Endothelial cell of umbilical vein (primary cell): ENCODE measurements at regions of chr9 and their contacts with region 1.

Region 1: DNA sequence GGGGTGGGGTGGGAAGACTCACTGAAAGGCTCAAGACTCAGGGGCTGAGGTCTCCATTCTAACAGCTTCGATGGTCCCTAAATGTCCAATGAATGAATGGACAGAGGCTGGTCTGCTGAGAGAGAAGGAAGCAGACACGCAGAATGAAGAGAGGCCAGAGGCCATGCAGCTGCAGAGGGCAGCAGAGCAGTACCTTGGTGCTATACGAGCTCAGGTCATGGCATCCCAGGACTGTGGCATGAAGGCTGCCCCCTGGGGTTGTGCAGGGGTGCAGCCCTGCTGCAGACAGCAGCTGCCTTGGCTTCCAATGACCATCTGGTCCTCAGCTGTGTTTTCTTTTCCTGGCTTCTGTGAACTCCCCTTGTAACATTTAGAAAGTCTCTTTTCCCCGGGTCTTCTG is 15.2 kb upstream of the CORO2A start:
- DNase-seq: no peak
- H3K4me3 ChIP-seq: no peak overlapping the region
- H3K27ac ChIP-seq: no peak overlapping the region
- H3K4me1 ChIP-seq: no peaks in the 10 kb centered on the region
- H3K27me3 ChIP-seq: no peaks in the 10 kb centered on the region
- CTCF ChIP-seq: no peak
- POLR2A ChIP-seq: no peak

Region 2: GRCh38 chr9:98045234-98046179 is 162.1 kb before region 1 on chr9:
- CTCF ChIA-PET with region 1: no interaction called
- POLR2A ChIA-PET with region 1: no interaction called
- dilution Hi-C with region 1: no loop called
- intact Hi-C with region 1: no loop called
- DNase-seq: no peak
- H3K4me3 ChIP-seq: no peak overlapping the region
- H3K27ac ChIP-seq: no peak overlapping the region
- H3K4me1 ChIP-seq: no peaks in the 10 kb centered on the region
- H3K27me3 ChIP-seq: peaks cover 0 to 2% of the 10 kb centered on the region in 2 experiments
- CTCF ChIP-seq: no peak
- POLR2A ChIP-seq: no peak

Region 3: DNA sequence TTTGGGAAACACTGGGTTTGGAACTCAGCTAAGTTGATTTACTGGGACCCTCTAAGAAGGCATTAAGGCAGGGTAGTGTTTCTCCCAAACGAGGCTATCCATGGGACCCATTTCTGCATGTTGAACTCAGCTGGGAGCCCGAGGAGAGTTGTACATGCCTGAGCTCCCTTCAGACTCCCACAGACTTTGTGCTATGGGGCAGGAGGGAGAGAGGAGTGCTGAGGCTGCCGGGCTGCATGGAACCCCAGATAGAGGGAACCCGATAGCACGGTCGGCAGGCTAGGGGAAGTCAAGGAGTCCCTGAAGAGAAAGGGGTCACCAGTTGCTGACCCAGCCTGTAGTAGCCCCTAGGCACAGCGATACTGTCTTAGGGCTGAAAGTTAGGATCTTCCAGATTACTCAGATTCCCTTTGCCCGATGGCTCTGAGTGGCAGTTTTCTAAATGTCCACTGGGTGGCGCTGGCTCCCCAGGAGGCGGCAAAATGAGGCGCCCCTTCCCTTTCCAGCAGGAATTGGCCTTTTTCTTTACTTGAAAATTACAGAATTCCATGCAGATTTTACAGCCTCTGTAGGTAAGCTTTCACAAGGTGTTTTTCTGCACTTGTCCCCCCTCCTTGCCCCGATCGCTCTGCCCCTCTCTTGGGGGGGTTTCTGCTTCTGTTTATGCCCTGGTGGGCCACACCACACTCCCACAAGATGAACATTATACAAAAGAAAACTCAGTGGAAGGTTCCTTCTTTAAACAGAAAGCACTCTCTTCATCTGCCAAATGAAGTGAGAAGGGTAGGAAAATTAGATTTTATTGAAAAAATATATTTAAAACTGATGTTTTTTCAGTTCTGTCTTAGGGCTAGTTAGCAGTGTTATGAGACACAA is 133.3 kb before region 1 on chr9:
- CTCF ChIA-PET with region 1: interaction called, 3 read pairs
- POLR2A ChIA-PET with region 1: no interaction called
- dilution Hi-C with region 1: no loop called
- intact Hi-C with region 1: loop called (anchors 2 kb)
- DNase-seq: peak; percentile 64
- H3K4me3 ChIP-seq: no peak overlapping the region
- H3K27ac ChIP-seq: no peak overlapping the region
- H3K4me1 ChIP-seq: no peaks in the 10 kb centered on the region
- H3K27me3 ChIP-seq: no peaks in the 10 kb centered on the region
- CTCF ChIP-seq: peak; percentile 87 to 93
- POLR2A ChIP-seq: no peak

Region 4: DNA sequence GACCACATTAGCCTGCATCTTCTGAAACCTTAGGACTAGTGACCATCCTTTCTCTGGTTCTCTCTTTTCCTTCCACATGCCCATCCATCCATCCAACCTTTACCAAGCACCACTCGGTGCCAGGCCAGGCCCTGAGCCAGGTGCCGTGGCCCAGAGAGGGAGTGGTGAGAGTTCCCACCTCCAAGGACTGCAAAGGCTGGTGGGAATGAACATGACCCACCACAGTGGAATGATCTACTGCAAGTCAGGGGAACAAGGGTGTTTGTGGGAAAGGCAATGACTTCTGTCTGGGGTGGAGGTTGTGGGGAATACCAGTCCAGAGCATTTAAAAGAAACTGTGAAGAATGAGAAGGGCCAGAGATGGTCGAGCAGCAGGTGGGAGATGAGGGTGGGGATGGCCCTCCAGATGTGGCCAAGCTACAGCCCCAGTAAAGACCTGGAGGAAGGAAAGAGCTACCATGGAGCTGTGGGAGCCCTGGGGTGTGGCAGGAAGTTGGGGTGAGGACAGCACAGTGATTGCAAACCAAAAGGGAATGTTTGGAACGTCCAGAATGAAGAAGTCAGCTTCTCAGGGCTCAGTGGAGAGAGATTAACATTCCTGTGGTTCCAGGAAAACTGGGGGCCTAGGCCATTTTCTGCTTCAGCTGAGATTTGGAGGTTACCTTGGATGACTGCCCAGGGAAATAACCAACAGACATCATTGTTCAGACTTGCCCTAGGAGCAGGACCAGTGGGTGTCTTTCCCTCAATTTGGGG is 15.5 kb after region 1 on chr9:
- CTCF ChIA-PET with region 1: interaction called, 5 read pairs
- POLR2A ChIA-PET with region 1: no interaction called
- dilution Hi-C with region 1: no loop called
- intact Hi-C with region 1: loop called (anchors 1 kb)
- DNase-seq: peak; percentile 32
- H3K4me3 ChIP-seq: no peak overlapping the region
- H3K27ac ChIP-seq: peak overlapping the region; percentile 75
- H3K4me1 ChIP-seq: peaks cover 15% of the 10 kb centered on the region
- H3K27me3 ChIP-seq: no peaks in the 10 kb centered on the region
- CTCF ChIP-seq: no peak
- POLR2A ChIP-seq: peak; percentile 41

Region 5: GRCh38 chr9:98241357-98242300 is 34.0 kb after region 1 on chr9:
- CTCF ChIA-PET with region 1: interaction called, 10 read pairs
- POLR2A ChIA-PET with region 1: interaction called, 5 read pairs
- dilution Hi-C with region 1: no loop called
- intact Hi-C with region 1: no loop called
- DNase-seq: no peak
- H3K4me3 ChIP-seq: no peak overlapping the region
- H3K27ac ChIP-seq: no peak overlapping the region
- H3K4me1 ChIP-seq: no peaks in the 10 kb centered on the region
- H3K27me3 ChIP-seq: no peaks in the 10 kb centered on the region
- CTCF ChIP-seq: peak in 1 of 2 donors; percentile 8
- POLR2A ChIP-seq: no peak

Region 6: GRCh38 chr9:98255578-98256296 is 48.1 kb after region 1 on chr9 and contains the start of gene TBC1D2:
- CTCF ChIA-PET with region 1: interaction called, 37 read pairs
- POLR2A ChIA-PET with region 1: no interaction called
- dilution Hi-C with region 1: no loop called
- intact Hi-C with region 1: no loop called
- DNase-seq: peak; percentile 94
- H3K4me3 ChIP-seq: peak within 1 kb of the TSS; percentile 67 to 81 (median 80)
- H3K27ac ChIP-seq: peak within 1 kb of the TSS; percentile 75
- H3K4me1 ChIP-seq: peaks cover 22% of the 10 kb centered on the region
- H3K27me3 ChIP-seq: no peaks in the 10 kb centered on the region
- CTCF ChIP-seq: peak in 1 of 2 donors; percentile 24
- POLR2A ChIP-seq: peak; percentile 64
- total RNA-seq, gene TBC1D2: 3.4 and 3.6 TPM in 2 replicates

Region 7: GRCh38 chr9:98263482-98264357 is 56.1 kb after region 1 on chr9:
- CTCF ChIA-PET with region 1: interaction called, 90 read pairs
- POLR2A ChIA-PET with region 1: no interaction called
- dilution Hi-C with region 1: no loop called
- intact Hi-C with region 1: loop called (anchors 1 kb)
- DNase-seq: peak; percentile 82
- H3K4me3 ChIP-seq: no peak overlapping the region
- H3K27ac ChIP-seq: no peak overlapping the region
- H3K4me1 ChIP-seq: no peaks in the 10 kb centered on the region
- H3K27me3 ChIP-seq: no peaks in the 10 kb centered on the region
- CTCF ChIP-seq: peak; percentile 90 to 92
- POLR2A ChIP-seq: no peak

Region 8: GRCh38 chr9:98612061-98612752 is 404.6 kb after region 1 on chr9:
- CTCF ChIA-PET with region 1: no interaction called
- POLR2A ChIA-PET with region 1: no interaction called
- dilution Hi-C with region 1: no loop called
- intact Hi-C with region 1: no loop called
- DNase-seq: no peak
- H3K4me3 ChIP-seq: no peak overlapping the region
- H3K27ac ChIP-seq: no peak overlapping the region
- H3K4me1 ChIP-seq: peaks cover 25% of the 10 kb centered on the region
- H3K27me3 ChIP-seq: no peaks in the 10 kb centered on the region
- CTCF ChIP-seq: no peak
- POLR2A ChIP-seq: no peak

Region 9: DNA sequence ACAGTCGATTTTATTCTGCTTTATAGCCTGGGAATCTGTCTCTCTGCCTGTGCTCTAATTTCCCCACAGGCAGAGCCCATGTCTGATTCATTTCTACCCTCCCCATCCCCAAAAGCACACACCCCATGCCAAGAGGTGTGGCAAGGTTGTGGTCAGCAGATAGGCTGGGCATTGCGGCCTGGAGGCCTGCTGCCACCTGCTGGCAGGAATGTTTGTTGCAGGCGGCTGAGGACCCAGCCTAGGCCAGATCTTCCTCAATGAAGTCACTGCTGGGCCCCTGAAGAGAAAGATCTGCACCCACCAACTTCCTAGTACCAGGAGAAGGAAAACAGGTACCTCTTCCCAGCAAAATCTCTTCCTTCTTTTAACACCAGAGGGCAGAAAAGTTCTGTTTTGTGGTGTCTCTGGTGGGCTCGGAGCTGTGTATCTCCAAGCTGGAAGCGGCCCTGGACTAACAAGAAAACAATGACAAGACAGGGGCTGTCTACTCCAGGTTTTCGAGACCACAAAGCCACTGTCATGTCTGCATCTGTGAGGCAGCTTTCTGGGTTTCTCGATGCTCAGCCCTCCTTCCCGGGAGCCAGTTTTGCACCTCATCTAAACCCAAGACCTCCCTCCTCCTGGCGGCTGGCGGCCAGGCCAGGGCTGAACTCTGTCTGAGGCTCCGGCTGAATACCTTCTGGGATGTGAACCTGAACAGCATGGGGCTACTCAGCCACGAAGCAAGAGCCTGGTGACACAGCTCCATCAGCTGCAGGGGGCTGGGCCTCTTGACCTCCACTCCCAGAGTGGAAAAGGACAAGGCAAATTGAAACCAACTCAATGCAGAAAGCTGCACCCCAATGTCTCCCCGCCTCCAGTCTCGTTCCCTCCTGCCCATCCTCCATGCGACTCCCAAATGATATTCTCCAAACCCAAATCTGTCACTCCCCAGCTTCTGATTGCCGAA is 583.8 kb after region 1 on chr9:
- CTCF ChIA-PET with region 1: interaction called, 3 read pairs
- POLR2A ChIA-PET with region 1: no interaction called
- dilution Hi-C with region 1: no loop called
- intact Hi-C with region 1: loop called (anchors 1 kb)
- DNase-seq: peak; percentile 80
- H3K4me3 ChIP-seq: no peak overlapping the region
- H3K27ac ChIP-seq: no peak overlapping the region
- H3K4me1 ChIP-seq: peaks cover 16% of the 10 kb centered on the region
- H3K27me3 ChIP-seq: no peaks in the 10 kb centered on the region
- CTCF ChIP-seq: peak; percentile 96 to 98
- POLR2A ChIP-seq: no peak